ENCODE measurements at regions of chr6 and their contacts with region 1.

Region 1: DNA sequence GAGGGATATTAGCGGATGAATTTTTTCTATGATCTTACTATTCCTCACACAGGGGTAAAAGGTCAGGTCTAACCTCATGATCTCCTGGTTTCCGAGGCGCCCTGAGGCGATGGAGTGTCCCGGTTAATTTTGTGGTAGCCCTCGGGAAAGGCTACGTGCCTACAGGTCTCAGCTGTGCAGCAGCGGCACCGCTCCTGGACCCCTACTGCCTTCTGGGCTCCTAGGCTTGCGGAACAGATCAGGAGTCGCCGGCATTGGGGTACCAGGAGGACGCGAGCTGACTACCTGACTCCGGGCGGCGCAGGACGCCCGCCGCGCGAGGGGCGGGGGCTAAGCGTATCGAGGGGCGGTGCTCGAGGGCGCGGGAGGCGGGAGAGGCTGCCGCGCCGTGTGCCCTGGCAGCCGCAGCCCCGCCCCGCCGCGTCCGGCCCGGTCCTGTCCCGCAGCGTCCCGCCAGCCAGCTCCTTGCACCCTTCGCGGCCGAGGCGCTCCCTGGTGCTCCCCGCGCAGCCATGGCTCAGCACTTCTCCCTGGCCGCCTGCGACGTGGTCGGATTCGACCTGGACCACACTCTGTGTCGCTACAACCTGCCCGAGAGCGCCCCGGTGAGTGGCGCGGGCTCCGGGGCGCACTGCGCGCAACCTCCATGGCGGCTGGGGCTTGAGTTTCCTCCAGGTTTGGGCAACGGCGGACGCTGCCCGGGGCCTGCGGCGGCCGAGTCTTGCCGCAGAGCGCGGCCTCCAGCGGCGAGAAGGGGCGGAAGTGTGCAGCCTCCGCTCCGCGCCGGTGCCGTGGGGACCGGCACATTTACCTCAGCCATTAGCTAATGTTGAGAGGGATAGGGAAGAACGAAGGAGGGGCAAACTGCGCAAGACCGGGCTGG is at the start of gene NT5DC1:
- DNase-seq: no peak
- H3K4me3 ChIP-seq: peak within 1 kb of the TSS; percentile 86
- CTCF ChIP-seq: peak; percentile 33

Region 2: DNA sequence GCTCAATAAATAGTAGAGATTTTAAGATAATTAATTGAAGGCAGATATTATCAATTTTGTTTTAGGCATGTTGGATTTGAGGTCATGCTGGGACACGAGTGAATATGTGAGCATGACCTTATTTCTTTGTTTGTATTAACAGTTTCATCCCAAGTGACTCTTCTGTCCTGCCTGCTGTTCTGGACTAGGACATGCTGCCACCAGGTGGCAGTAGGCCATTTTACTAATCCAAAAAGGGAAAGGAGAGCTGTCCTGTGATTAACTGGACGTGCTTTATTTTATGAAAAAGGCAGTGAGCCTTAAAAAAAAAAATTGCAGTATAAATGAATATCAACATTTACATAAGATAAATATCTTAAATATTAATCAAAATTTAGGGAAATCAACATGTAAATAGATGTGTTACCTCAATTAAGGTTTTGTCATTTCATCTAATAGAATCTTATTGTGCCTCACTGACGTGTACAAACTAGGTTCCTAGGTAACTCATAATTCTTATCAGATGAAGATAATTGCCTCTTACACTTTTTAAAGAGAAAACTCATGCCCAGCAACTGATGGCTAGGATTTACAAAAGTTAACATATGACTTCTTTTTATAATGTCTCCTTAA is 89.8 kb before region 1 on chr6:
- CTCF ChIA-PET with region 1: interaction called, 122 read pairs
- POLR2A ChIA-PET with region 1: interaction called, 4 read pairs
- DNase-seq: peak; percentile 12
- H3K4me3 ChIP-seq: no peak overlapping the region
- CTCF ChIP-seq: peak; percentile 75

Region 3: GRCh38 chr6:116060572-116061283 is 39.9 kb before region 1 on chr6 and contains the start of gene FRK:
- CTCF ChIA-PET with region 1: interaction called, 11 read pairs
- POLR2A ChIA-PET with region 1: no interaction called
- DNase-seq: no peak
- H3K4me3 ChIP-seq: peak within 1 kb of the TSS; percentile 36
- CTCF ChIP-seq: no peak

Measured in AG04449 (cell line).